Tibial artery (tissue), 4 donors: ENCODE measurements at regions of chr9 and their contacts with region 1.

Region 1: GRCh38 chr9:78213712-78214111 is 22.2 kb upstream of the CEP78 start:
- DNase-seq: no peak
- H3K4me3 ChIP-seq: no peak overlapping the region
- H3K27ac ChIP-seq: no peak overlapping the region
- H3K4me1 ChIP-seq: peaks cover 0 to 14% (median 6%) of the 10 kb centered on the region in 4 donors
- H3K27me3 ChIP-seq: no peaks in the 10 kb centered on the region
- CTCF ChIP-seq: peak in 1 of 2 experiments; percentile 16

Region 2: GRCh38 chr9:77417566-77417965 is 796.1 kb before region 1 on chr9:
- intact Hi-C with region 1: loop called (anchors 10 kb)
- DNase-seq: no peak
- H3K4me3 ChIP-seq: no peak overlapping the region
- H3K27ac ChIP-seq: no peak overlapping the region
- H3K4me1 ChIP-seq: no peaks in the 10 kb centered on the region
- H3K27me3 ChIP-seq: no peaks in the 10 kb centered on the region
- CTCF ChIP-seq: no peak

Region 3: DNA sequence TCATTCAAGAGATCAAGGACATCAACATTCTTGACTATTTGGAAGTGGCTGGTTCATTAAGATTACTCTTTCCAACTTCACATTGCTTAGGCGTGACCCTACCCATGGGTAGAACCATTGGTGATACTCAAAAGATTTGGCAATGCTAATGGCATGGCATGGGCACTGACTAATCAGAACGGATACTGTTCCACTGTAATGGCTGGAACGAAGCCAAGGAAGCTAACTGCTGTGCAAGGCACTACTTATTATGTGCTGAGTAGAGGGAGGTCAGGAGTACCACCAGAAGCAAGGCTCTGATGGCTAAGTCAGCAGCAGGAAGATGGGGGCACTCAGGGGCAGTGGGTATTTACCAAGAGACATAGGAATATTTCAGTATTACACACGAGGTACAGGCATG is 597.5 kb before region 1 on chr9:
- intact Hi-C with region 1: no loop called
- DNase-seq: no peak
- H3K4me3 ChIP-seq: no peak overlapping the region
- H3K27ac ChIP-seq: no peak overlapping the region
- H3K4me1 ChIP-seq: no peaks in the 10 kb centered on the region
- H3K27me3 ChIP-seq: no peaks in the 10 kb centered on the region
- CTCF ChIP-seq: no peak

Region 4: GRCh38 chr9:78144663-78145377 is 68.9 kb before region 1 on chr9:
- intact Hi-C with region 1: no loop called
- DNase-seq: no peak
- H3K4me3 ChIP-seq: no peak overlapping the region
- H3K27ac ChIP-seq: no peak overlapping the region
- H3K4me1 ChIP-seq: peaks cover 0 to 9% (median 2%) of the 10 kb centered on the region in 4 donors
- H3K27me3 ChIP-seq: no peaks in the 10 kb centered on the region
- CTCF ChIP-seq: no peak

Region 5: DNA sequence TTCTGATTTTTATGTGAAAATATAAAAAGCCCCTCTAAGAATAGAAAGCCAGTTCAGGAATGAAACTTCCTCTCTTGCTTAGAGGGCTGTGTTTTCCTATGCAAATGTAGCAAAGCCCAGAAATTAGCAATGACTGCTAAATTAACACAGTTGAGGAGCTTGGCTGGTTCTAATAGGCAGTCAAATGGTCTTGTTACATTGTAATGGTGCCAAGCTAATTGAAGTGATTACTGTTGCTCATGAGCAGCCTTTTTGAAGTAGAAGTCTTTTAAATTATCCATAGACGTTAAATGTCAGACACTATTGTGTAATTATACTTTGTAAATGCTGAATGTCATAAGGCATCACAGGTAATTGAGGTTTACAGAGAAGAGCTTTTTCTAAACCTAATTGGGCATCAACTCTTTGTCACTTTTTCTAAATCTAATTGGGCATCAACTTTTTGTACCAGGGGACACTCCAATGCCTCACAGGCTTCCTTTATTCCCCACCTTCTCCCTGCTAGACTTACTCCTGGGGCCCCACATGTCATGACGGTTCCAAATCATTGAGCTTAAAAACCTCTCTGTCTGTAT is 312.4 kb after region 1 on chr9:
- intact Hi-C with region 1: no loop called
- DNase-seq: no peak
- H3K4me3 ChIP-seq: no peak overlapping the region
- H3K27ac ChIP-seq: no peak overlapping the region
- H3K4me1 ChIP-seq: no peaks in the 10 kb centered on the region
- H3K27me3 ChIP-seq: no peaks in the 10 kb centered on the region
- CTCF ChIP-seq: no peak